PC-9 (cell line): ENCODE measurements at regions of chrX and their contacts with region 1.

Region 1: DNA sequence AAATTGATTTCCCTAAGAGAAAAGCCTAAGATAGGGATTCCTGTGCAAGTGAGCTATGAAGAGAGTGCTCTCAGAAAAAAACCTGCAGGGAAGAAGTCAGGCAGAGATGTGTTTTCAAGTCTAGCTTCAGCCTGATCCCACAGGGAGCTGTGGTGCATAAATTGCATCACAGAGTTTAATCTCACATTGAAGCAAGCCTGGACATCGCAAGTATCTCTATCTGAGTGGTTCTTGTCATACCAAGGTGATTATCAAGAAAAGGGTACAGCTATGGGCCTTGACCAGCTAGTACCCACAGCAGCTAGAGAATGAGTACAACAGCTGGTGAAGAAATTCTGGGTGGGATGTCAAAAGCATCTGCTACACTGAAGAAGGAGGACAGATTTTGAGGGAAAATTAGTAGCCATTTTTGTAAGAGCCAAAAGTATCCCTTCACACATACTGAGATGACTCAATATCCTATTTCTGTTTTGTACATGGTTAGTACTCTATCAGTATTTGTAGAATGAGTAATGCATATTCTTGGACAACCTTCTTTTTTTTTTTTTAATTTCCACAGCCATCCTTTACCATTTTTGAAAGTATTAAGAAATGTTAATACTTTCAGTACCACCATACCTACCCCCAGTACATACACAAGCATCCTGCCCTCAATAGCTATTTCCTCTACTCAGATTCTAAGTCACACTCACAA is 708.9 kb downstream of the IL1RAPL1 start:
- DNase-seq: no peak
- H3K4me3 ChIP-seq: no peak overlapping the region
- H3K27ac ChIP-seq: no peak overlapping the region
- H3K4me1 ChIP-seq: no peaks in the 10 kb centered on the region
- H3K27me3 ChIP-seq: no peaks in the 10 kb centered on the region
- CTCF ChIP-seq: no peak

Region 2: DNA sequence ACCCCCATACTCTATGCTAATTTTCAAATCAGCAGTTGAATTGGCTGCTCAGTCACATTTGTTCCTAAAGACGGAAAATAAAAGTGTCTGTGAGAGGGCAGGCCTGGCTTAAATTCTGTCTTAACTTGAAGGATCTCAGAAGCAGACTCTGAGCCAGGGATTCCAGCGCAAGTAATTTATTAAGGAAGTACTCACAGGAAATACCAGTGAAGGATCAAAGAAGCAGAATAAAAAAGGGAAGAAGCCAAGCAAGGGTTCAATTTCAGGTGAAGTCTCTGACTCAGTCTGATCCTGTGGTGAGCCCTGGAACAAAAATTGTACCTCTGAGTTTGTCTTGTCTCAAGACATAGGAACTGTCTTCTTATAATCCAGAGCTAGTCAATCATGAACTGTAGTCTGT is 656.7 kb before region 1 on chrX:
- CTCF ChIA-PET with region 1: no interaction called
- POLR2A ChIA-PET with region 1: no interaction called
- intact Hi-C with region 1: no loop called
- DNase-seq: no peak
- H3K4me3 ChIP-seq: no peak overlapping the region
- H3K27ac ChIP-seq: no peak overlapping the region
- H3K4me1 ChIP-seq: no peaks in the 10 kb centered on the region
- H3K27me3 ChIP-seq: no peaks in the 10 kb centered on the region
- CTCF ChIP-seq: no peak

Region 3: DNA sequence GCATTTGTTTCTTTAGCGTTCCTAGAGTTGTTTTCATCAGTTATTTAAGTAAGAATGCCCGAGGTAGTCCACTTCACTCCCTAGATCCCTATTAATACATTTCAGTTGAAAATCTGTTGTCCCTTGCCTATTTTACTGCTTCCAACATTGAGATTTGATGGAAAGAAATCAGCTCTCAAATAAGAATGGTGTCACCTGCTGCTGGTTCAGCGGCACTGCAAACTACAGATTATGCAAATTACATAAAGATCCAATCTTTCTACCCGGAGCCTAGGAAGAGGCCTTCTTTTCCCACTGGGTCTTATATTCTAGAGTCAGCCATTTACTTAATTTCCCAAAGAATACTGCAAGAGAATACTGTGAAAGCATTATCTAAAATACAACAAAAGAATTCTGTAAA is 321.6 kb after region 1 on chrX:
- CTCF ChIA-PET with region 1: no interaction called
- POLR2A ChIA-PET with region 1: no interaction called
- intact Hi-C with region 1: no loop called
- DNase-seq: no peak
- H3K4me3 ChIP-seq: no peak overlapping the region
- H3K27ac ChIP-seq: no peak overlapping the region
- H3K4me1 ChIP-seq: no peaks in the 10 kb centered on the region
- H3K27me3 ChIP-seq: no peaks in the 10 kb centered on the region
- CTCF ChIP-seq: no peak

Region 4: DNA sequence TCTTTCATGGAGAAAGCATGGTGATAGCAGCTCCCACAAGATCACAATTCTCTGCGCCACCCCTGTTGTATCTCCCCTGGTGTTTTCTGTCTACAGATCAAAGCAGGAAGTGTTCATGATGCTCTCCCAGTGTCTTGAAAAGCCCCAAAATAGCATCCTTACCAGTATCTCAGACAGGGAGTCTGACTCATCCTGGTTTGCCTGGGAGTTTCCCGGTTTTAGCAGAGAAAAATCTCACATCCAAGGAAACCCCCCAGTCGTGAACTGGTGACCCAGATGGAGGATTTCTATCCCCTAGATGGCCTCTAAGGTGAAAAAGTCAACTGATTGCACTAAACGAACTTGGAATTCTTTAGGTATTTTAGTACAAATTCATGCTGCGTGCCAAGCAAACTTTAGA is 1077.3 kb after region 1 on chrX:
- CTCF ChIA-PET with region 1: no interaction called
- POLR2A ChIA-PET with region 1: interaction called, 21 read pairs
- intact Hi-C with region 1: no loop called
- DNase-seq: no peak
- H3K4me3 ChIP-seq: no peak overlapping the region
- H3K27ac ChIP-seq: no peak overlapping the region
- H3K4me1 ChIP-seq: no peaks in the 10 kb centered on the region
- H3K27me3 ChIP-seq: no peaks in the 10 kb centered on the region
- CTCF ChIP-seq: no peak